ENCODE measurements at regions of chr6 and their contacts with region 1.

Region 1: GRCh38 chr6:75472885-75473284 is 20.7 kb downstream of the FILIP1 start:
- DNase-seq: no peak
- ATAC-seq: no peak
- H3K4me3 ChIP-seq: no peak overlapping the region
- H3K4me3 Mint-ChIP-seq: no peak overlapping the region
- H3K27ac ChIP-seq: no peak overlapping the region
- H3K27ac Mint-ChIP-seq: no peak overlapping the region
- H3K4me1 ChIP-seq: no peaks in the 10 kb centered on the region
- H3K4me1 Mint-ChIP-seq: no peaks in the 10 kb centered on the region
- H3K27me3 ChIP-seq: no peaks in the 10 kb centered on the region
- H3K27me3 Mint-ChIP-seq: peaks cover 16% of the 10 kb centered on the region
- CTCF ChIP-seq: no peak

Region 2: DNA sequence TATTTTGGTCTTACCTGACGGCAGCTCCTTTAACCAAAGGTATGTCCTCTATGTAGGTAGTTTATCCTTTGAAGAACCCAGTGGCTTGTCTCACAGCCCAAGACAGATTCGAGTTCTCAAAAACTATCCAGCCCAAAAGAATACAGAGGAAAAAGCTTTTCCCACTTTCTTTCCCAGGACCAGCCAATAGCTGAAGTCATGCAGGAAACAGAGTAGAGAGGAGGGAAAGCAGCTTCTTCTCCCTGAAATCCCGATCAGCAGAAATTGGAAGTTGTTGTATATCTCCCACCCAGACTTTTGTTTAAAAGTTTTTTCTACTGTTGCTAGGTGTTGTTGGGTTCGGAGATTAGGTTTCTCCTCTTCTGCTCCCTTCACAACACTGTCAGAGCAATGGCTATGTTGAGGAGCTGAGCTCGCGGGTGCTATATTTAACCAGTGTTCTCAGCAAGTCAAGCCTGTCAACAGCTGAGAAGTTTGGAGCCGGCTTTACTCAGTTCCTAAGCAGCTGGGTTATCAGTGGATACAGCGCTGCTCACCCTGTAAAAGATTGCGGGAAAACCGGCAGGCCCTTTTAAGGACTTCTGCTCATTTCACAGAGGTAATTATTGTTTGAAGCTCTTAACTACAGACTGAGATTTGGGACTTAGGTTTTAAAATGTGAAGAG is 20.6 kb after region 1 on chr6 and contains the start of gene FILIP1:
- CTCF ChIA-PET with region 1: no interaction called
- POLR2A ChIA-PET with region 1: no interaction called
- intact Hi-C with region 1: loop called in 1 of 2 experiments (anchors 2 kb)
- DNase-seq: no peak
- ATAC-seq: no peak
- H3K4me3 ChIP-seq: no peak within 1 kb of the TSS
- H3K4me3 Mint-ChIP-seq: no peak within 1 kb of the TSS
- H3K27ac ChIP-seq: no peak within 1 kb of the TSS
- H3K27ac Mint-ChIP-seq: no peak within 1 kb of the TSS
- H3K4me1 ChIP-seq: no peaks in the 10 kb centered on the region
- H3K4me1 Mint-ChIP-seq: peaks cover 5% of the 10 kb centered on the region
- H3K27me3 ChIP-seq: no peaks in the 10 kb centered on the region
- H3K27me3 Mint-ChIP-seq: peaks cover 33% of the 10 kb centered on the region
- CTCF ChIP-seq: no peak
- total RNA-seq, gene FILIP1: 0.06 TPM in 1 of 2 experiments, not detected in the other

Measured in CD8-positive, alpha-beta T cell (primary cell).